ENCODE measurements at regions of chr4 and their contacts with region 1.

Region 1: GRCh38 chr4:184825896-184826690 is at the start of gene ACSL1:
- DNase-seq: peak; percentile 48 to 88 (median 77)
- ATAC-seq: peak; percentile 84
- H3K4me3 ChIP-seq: peak within 1 kb of the TSS; percentile 56 to 78
- H3K4me3 Mint-ChIP-seq: peak within 1 kb of the TSS; percentile 91
- H3K27ac ChIP-seq: peak within 1 kb of the TSS; percentile 31 to 54
- H3K27ac Mint-ChIP-seq: peak within 1 kb of the TSS; percentile 90
- H3K4me1 ChIP-seq: peaks cover 22% of the 10 kb centered on the region
- H3K4me1 Mint-ChIP-seq: peaks cover 39% of the 10 kb centered on the region
- H3K27me3 ChIP-seq: no peaks in the 10 kb centered on the region
- H3K27me3 Mint-ChIP-seq: no peaks in the 10 kb centered on the region
- CTCF ChIP-seq: no peak
- total RNA-seq, gene ACSL1: 18.4 to 21.3 TPM

Region 2: GRCh38 chr4:183504064-183504929 is 1321.8 kb before region 1 on chr4:
- CTCF ChIA-PET with region 1: no interaction called
- POLR2A ChIA-PET with region 1: no interaction called
- intact Hi-C with region 1: loop called in 1 of 2 experiments (anchors 5 kb)
- DNase-seq: peak; percentile 99 to 100 (median 99)
- ATAC-seq: peak; percentile 78
- H3K4me3 ChIP-seq: peak overlapping the region; percentile 95 to 98
- H3K4me3 Mint-ChIP-seq: peak overlapping the region; percentile 98
- H3K27ac ChIP-seq: peak overlapping the region; percentile 84 to 98
- H3K27ac Mint-ChIP-seq: peak overlapping the region; percentile 99
- H3K4me1 ChIP-seq: peaks cover 14% of the 10 kb centered on the region
- H3K4me1 Mint-ChIP-seq: peaks cover 34% of the 10 kb centered on the region
- H3K27me3 ChIP-seq: no peaks in the 10 kb centered on the region
- H3K27me3 Mint-ChIP-seq: no peaks in the 10 kb centered on the region
- CTCF ChIP-seq: no peak

Region 3: GRCh38 chr4:184474263-184475095 is 351.6 kb before region 1 on chr4 and contains the start of gene IRF2:
- CTCF ChIA-PET with region 1: no interaction called
- POLR2A ChIA-PET with region 1: no interaction called
- intact Hi-C with region 1: loop called in 1 of 2 experiments (anchors 5 kb)
- DNase-seq: peak; percentile 91 to 99 (median 95)
- ATAC-seq: peak; percentile 82
- H3K4me3 ChIP-seq: peak within 1 kb of the TSS; percentile 78 to 93
- H3K4me3 Mint-ChIP-seq: peak within 1 kb of the TSS; percentile 98
- H3K27ac ChIP-seq: peak within 1 kb of the TSS; percentile 94 to 95
- H3K27ac Mint-ChIP-seq: peak within 1 kb of the TSS; percentile 99
- H3K4me1 ChIP-seq: peaks cover 38% of the 10 kb centered on the region
- H3K4me1 Mint-ChIP-seq: peaks cover 67% of the 10 kb centered on the region
- H3K27me3 ChIP-seq: no peaks in the 10 kb centered on the region
- H3K27me3 Mint-ChIP-seq: no peaks in the 10 kb centered on the region
- CTCF ChIP-seq: no peak
- total RNA-seq, gene IRF2: 7.9 to 9.3 TPM

Region 4: GRCh38 chr4:184745831-184746795 is 80.0 kb before region 1 on chr4:
- CTCF ChIA-PET with region 1: interaction called, 4 read pairs
- POLR2A ChIA-PET with region 1: no interaction called
- intact Hi-C with region 1: loop called (anchors 5 kb)
- DNase-seq: peak; percentile 31 to 81 (median 74)
- ATAC-seq: peak; percentile 97
- H3K4me3 ChIP-seq: no peak overlapping the region
- H3K4me3 Mint-ChIP-seq: peak overlapping the region; percentile 53
- H3K27ac ChIP-seq: no peak overlapping the region
- H3K27ac Mint-ChIP-seq: peak overlapping the region; percentile 78
- H3K4me1 ChIP-seq: peaks cover 8% of the 10 kb centered on the region
- H3K4me1 Mint-ChIP-seq: peaks cover 16% of the 10 kb centered on the region
- H3K27me3 ChIP-seq: no peaks in the 10 kb centered on the region
- H3K27me3 Mint-ChIP-seq: peaks cover 3% of the 10 kb centered on the region
- CTCF ChIP-seq: peak; percentile 68

Region 5: GRCh38 chr4:185209031-185209851 is 383.1 kb after region 1 on chr4 and contains the start of gene SNX25:
- CTCF ChIA-PET with region 1: no interaction called
- POLR2A ChIA-PET with region 1: no interaction called
- intact Hi-C with region 1: loop called (anchors 5 kb)
- DNase-seq: peak; percentile 68 to 92 (median 89)
- ATAC-seq: peak; percentile 92
- H3K4me3 ChIP-seq: peak within 1 kb of the TSS; percentile 60 to 71
- H3K4me3 Mint-ChIP-seq: peak within 1 kb of the TSS; percentile 92
- H3K27ac ChIP-seq: peak within 1 kb of the TSS; percentile 34 to 48
- H3K27ac Mint-ChIP-seq: peak within 1 kb of the TSS; percentile 84
- H3K4me1 ChIP-seq: peaks cover 33% of the 10 kb centered on the region
- H3K4me1 Mint-ChIP-seq: peaks cover 50% of the 10 kb centered on the region
- H3K27me3 ChIP-seq: no peaks in the 10 kb centered on the region
- H3K27me3 Mint-ChIP-seq: no peaks in the 10 kb centered on the region
- CTCF ChIP-seq: no peak
- total RNA-seq, gene SNX25: 18.0 to 18.2 TPM

Region 6: DNA sequence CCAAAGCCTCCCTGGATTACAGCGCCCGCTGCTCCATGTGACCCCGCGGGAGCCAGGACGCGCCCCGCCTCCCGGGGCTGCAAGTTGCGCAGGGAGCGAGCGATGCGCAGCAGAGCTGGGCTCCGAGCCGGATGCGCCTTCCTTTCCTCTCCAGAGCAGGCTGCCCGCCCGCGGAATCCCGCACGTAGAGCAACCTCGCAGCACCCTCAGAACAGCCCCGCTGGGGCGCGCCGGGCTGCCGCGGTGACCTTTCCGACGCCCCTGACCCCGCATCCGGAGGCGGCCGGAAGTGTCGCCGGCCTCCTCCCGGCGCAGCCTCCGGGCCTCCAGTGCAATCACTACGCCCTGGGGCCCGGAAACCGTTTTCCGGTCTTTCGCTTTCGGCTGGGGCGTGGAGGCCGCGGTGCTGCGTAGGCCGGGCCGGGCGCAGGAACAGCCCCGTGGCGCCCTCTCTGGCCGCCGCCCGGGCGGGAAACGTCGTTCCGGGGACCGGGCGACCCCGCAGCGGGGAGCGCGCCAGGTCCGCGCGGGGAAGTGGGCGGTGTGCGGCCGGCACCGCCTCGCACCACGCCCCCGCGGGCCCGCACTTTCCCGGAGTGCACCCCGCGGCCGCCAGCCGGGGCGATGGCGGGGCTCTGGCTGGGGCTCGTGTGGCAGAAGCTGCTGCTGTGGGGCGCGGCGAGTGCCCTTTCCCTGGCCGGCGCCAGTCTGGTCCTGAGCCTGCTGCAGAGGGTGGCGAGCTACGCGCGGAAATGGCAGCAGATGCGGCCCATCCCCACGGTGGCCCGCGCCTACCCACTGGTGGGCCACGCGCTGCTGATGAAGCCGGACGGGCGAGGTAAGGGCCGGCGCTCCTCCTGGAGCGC is 1365.3 kb after region 1 on chr4 and contains the start of gene CYP4V2:
- CTCF ChIA-PET with region 1: no interaction called
- POLR2A ChIA-PET with region 1: no interaction called
- intact Hi-C with region 1: loop called in 1 of 2 experiments (anchors 10 kb)
- DNase-seq: peak; percentile 64 to 92 (median 85)
- ATAC-seq: peak; percentile 80
- H3K4me3 ChIP-seq: peak within 1 kb of the TSS; percentile 73 to 85
- H3K4me3 Mint-ChIP-seq: peak within 1 kb of the TSS; percentile 90
- H3K27ac ChIP-seq: peak within 1 kb of the TSS; percentile 89 to 91
- H3K27ac Mint-ChIP-seq: peak within 1 kb of the TSS; percentile 98
- H3K4me1 ChIP-seq: peaks cover 25% of the 10 kb centered on the region
- H3K4me1 Mint-ChIP-seq: peaks cover 57% of the 10 kb centered on the region
- H3K27me3 ChIP-seq: no peaks in the 10 kb centered on the region
- H3K27me3 Mint-ChIP-seq: no peaks in the 10 kb centered on the region
- CTCF ChIP-seq: no peak
- total RNA-seq, gene CYP4V2: 7.9 to 9.9 TPM